GM12878 (cell line): ENCODE measurements at regions of chr5 and their contacts with region 1.

Region 1: GRCh38 chr5:151115274-151115905 is 34.6 kb upstream of the TNIP1 start:
- DNase-seq: no peak
- ATAC-seq: peak; percentile 82
- H3K4me3 ChIP-seq: no peak overlapping the region
- H3K27ac ChIP-seq: no peak overlapping the region
- H3K4me1 ChIP-seq: peaks cover 17% of the 10 kb centered on the region
- H3K27me3 ChIP-seq: no peaks in the 10 kb centered on the region
- CTCF ChIP-seq: peak; percentile 78 to 95 (median 94)
- EP300 ChIP-seq: no peak
- POLR2A ChIP-seq: no peak
- RAD21 ChIP-seq: peak; percentile 92

Region 2: DNA sequence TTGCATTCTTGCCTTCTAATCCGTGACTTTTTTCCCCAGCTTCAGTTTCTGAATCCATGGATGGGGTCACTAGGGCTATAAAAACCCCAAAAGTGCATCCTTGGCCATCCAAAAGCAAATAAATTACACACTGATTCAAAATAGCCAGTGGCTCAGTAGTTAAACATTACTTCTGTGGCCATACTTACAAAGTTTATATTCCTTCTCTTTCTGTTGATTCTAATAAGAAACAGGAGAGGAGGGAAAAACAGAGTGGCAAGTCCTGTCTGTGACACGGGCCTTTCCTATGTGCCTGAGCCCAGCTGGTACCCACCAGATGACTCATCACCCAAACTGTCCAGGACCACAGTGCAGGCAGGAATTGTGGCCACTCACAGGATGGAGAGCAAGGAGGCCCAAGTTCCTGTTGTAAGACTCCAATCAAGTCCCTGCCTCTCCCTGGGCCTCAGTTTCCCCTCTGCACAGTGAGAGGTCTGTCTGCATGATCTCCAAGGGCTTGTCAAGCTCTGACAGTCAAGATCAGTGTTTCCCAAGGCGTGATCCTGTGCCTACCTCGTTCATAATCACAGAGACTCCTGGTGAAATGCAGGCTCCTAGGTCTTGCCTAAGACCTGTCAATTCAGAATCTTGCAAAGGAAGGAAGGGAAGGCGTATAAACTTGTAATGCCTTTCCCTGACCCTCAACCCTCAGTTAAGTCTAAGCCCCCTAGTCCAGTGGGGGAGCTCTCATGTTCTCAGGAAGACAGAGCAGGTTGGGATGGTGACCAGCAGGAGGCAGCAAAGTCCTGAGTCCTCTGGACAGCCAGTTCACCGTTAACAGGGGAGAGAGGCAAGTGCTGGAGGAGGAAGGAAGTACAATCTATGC is 64.1 kb before region 1 on chr5:
- CTCF ChIA-PET with region 1: interaction called, 691 read pairs
- POLR2A ChIA-PET with region 1: interaction called, 23 read pairs
- RAD21 ChIA-PET with region 1: interaction called, 178 read pairs
- SMC1A ChIA-PET with region 1: interaction called, 279 read pairs
- in situ Hi-C with region 1: loop called (anchors 5 kb)
- intact Hi-C with region 1: loop called (anchors 1 kb)
- DNase-seq: peak; percentile 43
- ATAC-seq: peak; percentile 93
- H3K4me3 ChIP-seq: no peak overlapping the region
- H3K27ac ChIP-seq: no peak overlapping the region
- H3K4me1 ChIP-seq: no peaks in the 10 kb centered on the region; the same call in 1 of the 2 replicates
- H3K27me3 ChIP-seq: no peaks in the 10 kb centered on the region
- CTCF ChIP-seq: peak; percentile 86 to 87 (median 86)
- EP300 ChIP-seq: no peak
- POLR2A ChIP-seq: no peak
- RAD21 ChIP-seq: peak; percentile 91

Region 3: DNA sequence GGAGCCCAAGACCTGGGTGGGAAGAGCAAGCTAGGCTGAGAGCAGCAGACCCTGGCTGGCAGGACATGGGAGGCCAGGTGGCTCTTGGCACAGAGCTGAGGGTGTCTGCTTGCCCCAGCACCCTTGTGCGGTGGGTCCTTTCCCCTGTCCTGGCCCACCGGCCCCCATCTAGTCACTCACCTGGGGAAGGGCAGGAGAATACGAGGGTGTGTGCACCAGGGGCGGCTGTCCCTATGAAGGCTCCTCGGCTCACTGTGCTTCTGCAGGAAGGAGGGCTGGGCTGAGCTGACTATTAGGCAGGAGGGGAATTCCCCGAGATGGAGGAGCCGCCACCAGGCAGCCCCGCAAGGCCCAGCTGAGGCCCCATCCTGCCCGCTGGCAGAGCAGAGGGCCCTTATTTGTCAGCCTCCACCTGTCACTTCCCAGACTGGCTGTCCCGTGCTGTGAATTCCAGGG is 28.5 kb before region 1 on chr5:
- CTCF ChIA-PET with region 1: interaction called, 90 read pairs
- POLR2A ChIA-PET with region 1: interaction called, 17 read pairs
- RAD21 ChIA-PET with region 1: interaction called, 90 read pairs
- SMC1A ChIA-PET with region 1: interaction called, 83 read pairs
- in situ Hi-C with region 1: no loop called
- intact Hi-C with region 1: no loop called
- DNase-seq: no peak
- ATAC-seq: peak; percentile 79
- H3K4me3 ChIP-seq: peak overlapping the region; percentile 89
- H3K27ac ChIP-seq: peak overlapping the region; percentile 88
- H3K4me1 ChIP-seq: peaks cover 29% of the 10 kb centered on the region
- H3K27me3 ChIP-seq: no peaks in the 10 kb centered on the region
- CTCF ChIP-seq: no peak
- EP300 ChIP-seq: no peak
- POLR2A ChIP-seq: peak; percentile 89
- RAD21 ChIP-seq: no peak

Region 4: GRCh38 chr5:151134238-151134637 is 18.8 kb after region 1 on chr5:
- CTCF ChIA-PET with region 1: interaction called, 1,107 read pairs
- POLR2A ChIA-PET with region 1: interaction called, 7 read pairs
- RAD21 ChIA-PET with region 1: interaction called, 3 read pairs
- SMC1A ChIA-PET with region 1: interaction called, 1,132 read pairs
- in situ Hi-C with region 1: no loop called
- intact Hi-C with region 1: no loop called
- DNase-seq: no peak
- ATAC-seq: peak; percentile 65
- H3K4me3 ChIP-seq: peak overlapping the region; percentile 11; the same call in 1 of the 2 replicates
- H3K27ac ChIP-seq: peak overlapping the region; percentile 58
- H3K4me1 ChIP-seq: peaks cover 47% of the 10 kb centered on the region
- H3K27me3 ChIP-seq: no peaks in the 10 kb centered on the region
- CTCF ChIP-seq: no peak
- EP300 ChIP-seq: no peak
- POLR2A ChIP-seq: no peak; the same call in 1 of the 2 replicates
- RAD21 ChIP-seq: no peak

Region 5: DNA sequence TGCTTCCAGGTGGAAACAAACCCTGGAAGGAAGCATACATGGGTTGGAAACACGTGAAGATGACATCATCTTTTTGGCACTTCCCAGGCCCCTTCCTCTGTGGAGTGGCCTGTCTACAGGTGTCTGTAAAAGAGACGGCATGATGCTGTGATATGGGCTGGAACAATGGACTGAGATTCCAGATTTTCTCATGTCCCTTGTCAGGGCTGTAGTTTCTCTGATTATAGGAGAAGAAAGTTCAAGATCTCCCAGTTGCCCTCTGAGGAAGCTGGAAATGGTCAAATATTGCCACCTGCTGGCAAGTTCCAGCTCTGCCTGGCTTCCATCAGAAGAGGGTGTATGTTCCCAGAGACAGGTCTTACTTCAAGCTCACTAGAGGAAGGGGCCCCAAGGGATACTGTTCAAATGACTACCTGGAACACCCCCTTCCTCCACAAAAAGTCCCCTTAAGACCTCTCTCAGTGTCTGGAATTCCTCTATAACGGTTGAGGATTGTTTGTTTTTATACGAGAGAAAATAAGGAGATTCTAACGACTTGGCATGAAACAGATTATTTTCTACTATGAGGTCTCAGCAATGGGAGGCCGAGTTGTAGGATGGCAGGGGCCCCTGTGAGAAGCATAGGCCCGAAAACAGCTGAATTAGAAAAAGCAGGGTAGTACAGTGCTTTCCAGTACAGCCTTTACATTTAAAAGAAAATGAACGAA is 49.4 kb after region 1 on chr5:
- CTCF ChIA-PET with region 1: interaction called, 1,107 read pairs
- POLR2A ChIA-PET with region 1: interaction called, 4 read pairs
- RAD21 ChIA-PET with region 1: interaction called, 110 read pairs
- SMC1A ChIA-PET with region 1: interaction called, 1,132 read pairs
- in situ Hi-C with region 1: loop called (anchors 5 kb)
- intact Hi-C with region 1: loop called (anchors 2 kb)
- DNase-seq: peak; percentile 83
- ATAC-seq: peak; percentile 98
- H3K4me3 ChIP-seq: no peak overlapping the region
- H3K27ac ChIP-seq: no peak overlapping the region
- H3K4me1 ChIP-seq: peaks cover 6% of the 10 kb centered on the region; the same call in 1 of the 2 replicates
- H3K27me3 ChIP-seq: no peaks in the 10 kb centered on the region
- CTCF ChIP-seq: peak; percentile 87 to 98 (median 92); a peak in 5 of 6 replicates
- EP300 ChIP-seq: no peak
- POLR2A ChIP-seq: no peak
- RAD21 ChIP-seq: peak; percentile 100

Region 6: GRCh38 chr5:151239237-151239861 is 124.0 kb after region 1 on chr5:
- CTCF ChIA-PET with region 1: interaction called, 62 read pairs
- POLR2A ChIA-PET with region 1: no interaction called
- RAD21 ChIA-PET with region 1: interaction called, 13 read pairs
- SMC1A ChIA-PET with region 1: interaction called, 14 read pairs
- in situ Hi-C with region 1: no loop called
- intact Hi-C with region 1: no loop called
- DNase-seq: no peak
- ATAC-seq: peak; percentile 61
- H3K4me3 ChIP-seq: no peak overlapping the region; the same call in 1 of the 2 replicates
- H3K27ac ChIP-seq: no peak overlapping the region
- H3K4me1 ChIP-seq: peaks cover 70% of the 10 kb centered on the region
- H3K27me3 ChIP-seq: no peaks in the 10 kb centered on the region
- CTCF ChIP-seq: peak; percentile 66 to 72 (median 72)
- EP300 ChIP-seq: no peak
- POLR2A ChIP-seq: no peak
- RAD21 ChIP-seq: peak; percentile 82

Region 7: DNA sequence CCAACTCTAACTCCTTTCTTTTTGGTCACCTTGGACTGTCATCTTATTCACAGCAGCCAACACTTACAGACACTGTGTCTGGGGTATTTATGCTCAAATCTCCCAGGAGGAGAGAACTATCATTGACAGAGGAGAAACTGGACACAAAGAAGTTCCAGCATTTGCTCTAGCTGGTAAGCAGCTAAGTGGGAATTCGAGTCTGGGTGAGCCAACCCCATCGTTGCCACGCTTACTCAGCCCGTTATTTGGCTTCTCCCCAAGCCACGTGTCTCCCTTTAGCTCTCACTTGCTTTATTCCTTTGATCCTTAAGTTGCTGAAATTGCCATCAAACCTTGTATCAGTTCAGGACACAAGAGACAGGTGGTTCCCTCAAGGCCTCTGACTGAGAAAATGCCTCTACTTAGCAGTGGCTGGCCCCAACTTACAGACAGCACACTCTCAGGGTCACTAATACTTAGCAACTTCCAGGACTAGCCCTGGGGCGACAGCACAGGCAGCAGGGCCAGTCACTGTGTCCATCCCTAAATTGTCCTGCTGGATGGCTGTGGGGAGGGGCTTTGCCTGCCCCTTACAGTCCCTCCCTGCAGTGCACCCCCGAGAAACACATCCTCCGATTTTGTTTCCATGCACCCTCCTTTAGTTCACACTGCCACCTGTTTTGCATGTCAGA is 230.6 kb after region 1 on chr5:
- CTCF ChIA-PET with region 1: no interaction called
- POLR2A ChIA-PET with region 1: no interaction called
- RAD21 ChIA-PET with region 1: no interaction called
- SMC1A ChIA-PET with region 1: no interaction called
- in situ Hi-C with region 1: no loop called
- intact Hi-C with region 1: no loop called
- DNase-seq: no peak
- ATAC-seq: no peak
- H3K4me3 ChIP-seq: no peak overlapping the region
- H3K27ac ChIP-seq: no peak overlapping the region
- H3K4me1 ChIP-seq: no peaks in the 10 kb centered on the region
- H3K27me3 ChIP-seq: peaks cover 0 to 4% of the 10 kb centered on the region in 2 experiments; a peak in 1 of 4 replicates
- CTCF ChIP-seq: no peak
- EP300 ChIP-seq: no peak
- POLR2A ChIP-seq: no peak
- RAD21 ChIP-seq: no peak

Region 8: DNA sequence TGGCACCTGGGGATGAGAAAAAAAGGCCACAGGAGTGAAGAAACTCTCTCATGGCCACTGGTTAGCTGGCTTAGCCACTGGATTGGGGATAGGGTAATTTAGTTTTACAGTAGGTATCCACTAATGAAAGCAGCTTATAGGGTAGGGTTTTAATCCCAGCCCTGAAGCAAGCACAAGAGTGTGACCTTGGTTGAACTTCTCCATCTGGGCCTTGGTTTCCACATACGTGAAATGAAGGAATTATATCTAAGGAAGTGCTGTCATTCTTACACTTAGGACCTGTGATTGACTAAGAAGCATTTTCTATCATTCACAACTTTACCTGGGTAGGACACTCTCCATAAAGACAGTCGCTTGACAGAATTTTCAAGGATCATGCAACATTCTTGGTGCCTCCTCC is 426.2 kb after region 1 on chr5:
- CTCF ChIA-PET with region 1: no interaction called
- POLR2A ChIA-PET with region 1: no interaction called
- RAD21 ChIA-PET with region 1: no interaction called
- SMC1A ChIA-PET with region 1: no interaction called
- in situ Hi-C with region 1: no loop called
- intact Hi-C with region 1: no loop called
- DNase-seq: no peak
- ATAC-seq: no peak
- H3K4me3 ChIP-seq: no peak overlapping the region
- H3K27ac ChIP-seq: no peak overlapping the region
- H3K4me1 ChIP-seq: no peaks in the 10 kb centered on the region
- H3K27me3 ChIP-seq: peaks cover 4 to 10% of the 10 kb centered on the region in 2 experiments; a peak in 2 of 4 replicates
- CTCF ChIP-seq: no peak
- EP300 ChIP-seq: no peak
- POLR2A ChIP-seq: no peak
- RAD21 ChIP-seq: no peak